Common myeloid progenitor, CD34-positive (primary cell): ENCODE measurements at regions of chr10 and their contacts with region 1.

Region 1: GRCh38 chr10:71740069-71740468 is 20.5 kb upstream of the C10orf105 start:
- DNase-seq: peak in 2 of 3 donors; percentile 22 to 35
- H3K4me3 ChIP-seq: no peak overlapping the region
- H3K27ac ChIP-seq: no peak overlapping the region
- H3K4me1 ChIP-seq: peaks cover 15 to 83% (median 72%) of the 10 kb centered on the region in 4 experiments
- H3K27me3 ChIP-seq: no peaks in the 10 kb centered on the region

Region 2: DNA sequence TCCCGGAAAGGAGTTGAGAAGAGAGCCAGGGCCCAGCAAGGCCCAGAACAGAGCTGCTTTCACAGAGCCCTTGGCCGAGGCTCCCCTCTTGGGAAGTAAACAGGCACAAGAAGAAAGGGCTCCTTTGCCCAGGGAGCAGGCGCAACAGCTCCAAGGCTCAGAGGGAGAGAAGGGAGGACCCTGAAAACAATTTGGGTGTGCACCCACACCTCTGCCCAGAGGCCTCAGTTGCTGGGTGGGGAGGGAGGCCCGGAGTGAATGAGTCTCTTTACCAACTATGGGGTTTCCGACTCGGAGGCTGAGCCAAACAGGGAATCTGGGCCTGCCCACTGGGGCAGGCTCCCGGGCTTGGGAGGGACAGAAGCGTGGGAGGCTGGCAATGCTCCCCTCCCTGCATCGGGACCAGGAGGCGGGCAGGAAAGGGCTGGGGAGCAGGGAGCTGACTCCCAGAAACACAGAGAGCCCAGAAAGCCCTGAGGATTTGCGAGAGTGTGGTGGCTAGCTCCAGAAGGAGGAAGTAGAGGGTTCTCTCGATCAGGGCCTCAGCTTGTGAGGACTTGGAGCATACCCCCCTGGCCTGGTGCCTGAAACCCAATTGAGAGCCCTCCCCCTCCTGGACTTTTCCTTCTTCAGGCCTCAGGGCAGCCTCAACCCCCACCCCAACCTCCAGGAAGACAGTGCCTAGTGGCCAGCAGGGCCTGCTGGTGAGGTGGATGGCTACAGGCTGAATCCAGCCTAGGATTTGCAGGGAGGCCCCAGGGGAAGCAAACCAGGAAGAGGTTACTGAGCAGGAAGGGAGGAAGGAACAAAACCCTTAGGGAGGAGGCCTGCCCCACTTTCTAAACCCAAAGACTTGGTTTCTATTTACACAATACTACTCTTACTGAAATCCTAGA is 26.7 kb before region 1 on chr10:
- CTCF ChIA-PET with region 1: interaction called, 10 read pairs
- POLR2A ChIA-PET with region 1: no interaction called
- DNase-seq: peak in 2 of 3 donors; percentile 67 to 73
- H3K4me3 ChIP-seq: peak overlapping the region in 2 of 7 experiments; percentile 3 to 19
- H3K27ac ChIP-seq: peak overlapping the region in 1 of 2 experiments; percentile 52
- H3K4me1 ChIP-seq: peaks cover 7 to 69% (median 40%) of the 10 kb centered on the region in 4 experiments
- H3K27me3 ChIP-seq: no peaks in the 10 kb centered on the region

Region 3: DNA sequence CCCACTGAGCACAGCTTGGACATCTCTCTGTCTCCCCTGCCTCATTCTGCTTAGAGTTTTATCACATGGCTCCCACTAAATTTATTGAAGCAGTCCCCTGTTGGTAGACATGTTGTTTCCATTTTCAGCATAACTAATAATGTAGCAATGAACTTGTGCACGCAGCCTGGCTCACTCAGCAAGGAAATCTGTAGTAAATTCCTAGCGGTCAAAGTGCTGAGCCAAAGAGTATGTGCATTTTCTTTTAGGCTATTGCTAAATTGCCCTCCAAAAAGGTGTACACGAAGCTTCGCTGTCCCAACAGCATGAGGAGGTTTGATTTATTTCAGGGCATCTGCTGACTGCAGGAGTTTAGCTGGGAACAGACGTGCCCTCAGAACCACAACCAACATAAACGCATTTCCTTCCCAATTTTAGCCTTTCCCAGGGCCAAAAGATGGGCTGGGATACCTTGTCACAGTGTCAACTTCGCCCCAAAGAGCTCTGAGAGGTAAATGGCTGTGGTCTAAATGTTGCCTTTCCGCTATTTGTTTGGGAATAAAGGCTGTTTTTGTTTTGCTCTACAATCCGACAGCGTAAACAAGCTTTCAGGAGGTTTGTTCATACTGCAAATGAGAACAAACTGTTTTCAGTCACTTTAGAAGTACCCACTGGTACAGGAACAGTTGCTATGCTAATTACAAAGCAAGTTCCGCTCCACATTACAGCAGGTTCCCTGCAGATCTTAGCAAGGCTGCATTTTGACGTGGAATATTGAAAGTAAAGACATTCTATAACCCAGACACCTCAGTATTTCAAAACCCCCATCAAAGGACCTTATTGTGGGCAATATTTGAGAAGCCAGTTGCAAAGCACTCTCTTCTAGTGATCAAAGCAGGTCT is 16.5 kb after region 1 on chr10:
- CTCF ChIA-PET with region 1: interaction called, 23 read pairs
- POLR2A ChIA-PET with region 1: no interaction called
- DNase-seq: peak in 2 of 3 donors; percentile 75 to 80
- H3K4me3 ChIP-seq: peak overlapping the region in 4 of 7 experiments; percentile 34 to 45 (median 40)
- H3K27ac ChIP-seq: peak overlapping the region; percentile 30 to 63
- H3K4me1 ChIP-seq: peaks cover 52 to 88% (median 87%) of the 10 kb centered on the region in 4 experiments
- H3K27me3 ChIP-seq: no peaks in the 10 kb centered on the region